ENCODE measurements at regions of chr11 and their contacts with region 1.

Region 1: DNA sequence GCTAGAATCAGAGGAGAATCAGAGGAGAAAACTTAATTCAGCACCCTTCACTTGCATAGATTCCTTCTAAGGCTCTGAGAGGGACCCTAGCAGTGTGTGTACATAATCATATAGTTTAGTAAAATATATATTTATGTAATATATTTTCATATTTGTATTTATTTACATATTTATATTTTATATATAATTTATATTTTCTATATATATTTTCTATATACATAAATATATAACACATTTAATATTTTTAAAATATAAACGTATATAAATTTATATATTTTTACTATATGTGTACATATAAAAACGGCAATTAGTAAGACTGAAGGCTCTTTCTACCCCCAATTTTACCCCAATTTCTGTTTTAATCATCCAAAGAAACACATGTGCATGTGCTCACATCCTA is 80.3 kb downstream of the NXPE2 start:
- DNase-seq: no peak
- ATAC-seq: no peak
- H3K4me3 ChIP-seq: no peak overlapping the region
- H3K27ac ChIP-seq: no peak overlapping the region
- H3K4me1 ChIP-seq: no peaks in the 10 kb centered on the region
- H3K27me3 ChIP-seq: no peaks in the 10 kb centered on the region
- CTCF ChIP-seq: no peak

Region 2: GRCh38 chr11:115103921-115104320 is 345.3 kb after region 1 on chr11:
- intact Hi-C with region 1: loop called (anchors 10 kb)
- DNase-seq: no peak
- ATAC-seq: no peak
- H3K4me3 ChIP-seq: no peak overlapping the region
- H3K27ac ChIP-seq: no peak overlapping the region
- H3K4me1 ChIP-seq: no peaks in the 10 kb centered on the region
- H3K27me3 ChIP-seq: no peaks in the 10 kb centered on the region
- CTCF ChIP-seq: no peak

Measured in lower lobe of right lung (tissue), 2 donors.